ENCODE measurements at regions of chr3 and their contacts with region 1.

Region 1: GRCh38 chr3:97793420-97794019 is 28.3 kb upstream of the CRYBG3 start:
- H3K4me3 ChIP-seq: no peak overlapping the region
- H3K27ac ChIP-seq: no peak overlapping the region
- H3K4me1 ChIP-seq: no peaks in the 10 kb centered on the region
- CTCF ChIP-seq: peak; percentile 49; the same call in 1 of the 2 replicates

Region 2: DNA sequence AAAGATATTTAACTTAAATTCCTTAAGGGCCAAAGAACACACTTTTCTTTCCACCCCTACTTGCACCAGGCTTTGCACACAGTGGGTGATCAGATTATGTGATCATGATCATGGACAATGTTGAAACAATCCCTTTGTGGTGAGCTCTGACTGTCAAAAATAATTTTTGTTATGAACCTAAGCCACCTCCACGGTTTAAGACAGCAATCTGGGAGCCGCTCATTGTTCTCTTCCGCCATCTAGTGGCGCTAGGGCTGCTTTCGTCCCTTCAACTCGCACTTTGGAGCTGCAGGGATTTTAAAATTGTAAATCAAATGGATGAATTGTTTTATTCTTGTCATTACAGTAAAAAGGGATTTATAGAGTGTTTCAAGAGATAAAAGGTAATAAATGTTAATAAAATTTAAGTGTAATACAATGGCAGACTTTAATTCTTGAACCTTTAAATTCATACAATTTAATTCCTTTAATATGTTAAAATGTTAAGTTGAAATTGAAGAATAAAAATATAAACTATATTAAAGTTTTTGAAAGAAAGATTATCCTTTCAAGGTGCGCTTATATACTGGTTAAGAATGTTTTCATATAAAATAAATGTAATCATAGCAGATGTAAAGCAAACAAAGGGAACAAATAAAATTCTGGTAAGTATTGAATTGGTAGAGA is 74.2 kb before region 1 on chr3:
- CTCF ChIA-PET with region 1: no interaction called
- POLR2A ChIA-PET with region 1: no interaction called
- H3K4me3 ChIP-seq: peak overlapping the region; percentile 26
- H3K27ac ChIP-seq: no peak overlapping the region
- H3K4me1 ChIP-seq: peaks cover 2% of the 10 kb centered on the region; the same call in 1 of the 2 replicates
- CTCF ChIP-seq: peak; percentile 22; the same call in 1 of the 2 replicates

Region 3: GRCh38 chr3:98022978-98023820 is 229.7 kb after region 1 on chr3:
- CTCF ChIA-PET with region 1: interaction called, 42 read pairs
- POLR2A ChIA-PET with region 1: no interaction called
- H3K4me3 ChIP-seq: no peak overlapping the region
- H3K27ac ChIP-seq: no peak overlapping the region
- H3K4me1 ChIP-seq: no peaks in the 10 kb centered on the region
- CTCF ChIP-seq: peak; percentile 41; the same call in 1 of the 2 replicates